Activated naive CD4-positive, alpha-beta T cell treated with anti-CD3 and anti-CD28 coated beads for 36 hours (primary cell): ENCODE measurements at regions of chr2 and their contacts with region 1.

Region 1: GRCh38 chr2:157433394-157433793 is 10.5 kb downstream of the CYTIP start:
- DNase-seq: no peak
- H3K4me3 Mint-ChIP-seq: peak overlapping the region; percentile 75
- H3K27ac Mint-ChIP-seq: peak overlapping the region; percentile 100
- H3K4me1 Mint-ChIP-seq: peaks cover 62% of the 10 kb centered on the region
- H3K27me3 Mint-ChIP-seq: no peaks in the 10 kb centered on the region

Region 2: GRCh38 chr2:156486147-156486546 is 947.2 kb before region 1 on chr2:
- CTCF ChIA-PET with region 1: no interaction called
- intact Hi-C with region 1: no loop called
- DNase-seq: no peak
- H3K4me3 Mint-ChIP-seq: no peak overlapping the region
- H3K27ac Mint-ChIP-seq: no peak overlapping the region
- H3K4me1 Mint-ChIP-seq: peaks cover 34% of the 10 kb centered on the region
- H3K27me3 Mint-ChIP-seq: no peaks in the 10 kb centered on the region

Region 3: DNA sequence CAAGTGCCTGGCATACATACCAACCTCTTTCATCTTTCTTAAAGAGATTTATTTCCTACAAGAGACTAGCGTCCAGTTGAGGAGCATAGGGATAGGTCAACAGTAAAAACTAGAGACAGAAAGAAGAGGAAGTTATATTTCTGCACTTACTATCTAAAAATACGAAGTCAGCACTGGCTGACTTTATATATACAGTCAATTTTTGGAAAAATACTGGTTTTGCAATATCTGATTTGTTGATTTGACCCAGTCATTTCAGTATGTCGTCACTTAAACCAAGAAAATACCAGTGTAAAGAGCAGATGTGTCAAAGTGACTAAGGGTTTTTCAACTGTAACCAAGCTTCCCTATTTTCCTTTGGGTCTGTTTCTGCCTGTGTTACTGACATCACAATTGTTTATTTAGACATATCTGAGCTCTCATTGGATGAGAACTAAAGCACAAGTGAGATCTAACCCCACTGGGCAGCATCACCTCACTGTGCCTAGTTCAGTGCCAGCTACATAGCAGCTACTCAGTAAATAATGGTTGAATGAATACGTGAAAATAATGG is 12.5 kb before region 1 on chr2:
- CTCF ChIA-PET with region 1: interaction called, 6 read pairs
- intact Hi-C with region 1: loop called (anchors 1 kb)
- DNase-seq: peak; percentile 66
- H3K4me3 Mint-ChIP-seq: peak overlapping the region; percentile 33
- H3K27ac Mint-ChIP-seq: peak overlapping the region; percentile 95
- H3K4me1 Mint-ChIP-seq: peaks cover 79% of the 10 kb centered on the region
- H3K27me3 Mint-ChIP-seq: no peaks in the 10 kb centered on the region